ENCODE measurements at regions of chr9 and their contacts with region 1.

Region 1: GRCh38 chr9:4228606-4229005 is 71.3 kb downstream of the GLIS3 start:
- DNase-seq: peak; percentile 20
- H3K4me3 ChIP-seq: no peak overlapping the region
- H3K27ac ChIP-seq: no peak overlapping the region
- H3K4me1 ChIP-seq: peaks cover 16% of the 10 kb centered on the region
- H3K27me3 ChIP-seq: no peaks in the 10 kb centered on the region
- CTCF ChIP-seq: peak; percentile 53 to 67

Region 2: DNA sequence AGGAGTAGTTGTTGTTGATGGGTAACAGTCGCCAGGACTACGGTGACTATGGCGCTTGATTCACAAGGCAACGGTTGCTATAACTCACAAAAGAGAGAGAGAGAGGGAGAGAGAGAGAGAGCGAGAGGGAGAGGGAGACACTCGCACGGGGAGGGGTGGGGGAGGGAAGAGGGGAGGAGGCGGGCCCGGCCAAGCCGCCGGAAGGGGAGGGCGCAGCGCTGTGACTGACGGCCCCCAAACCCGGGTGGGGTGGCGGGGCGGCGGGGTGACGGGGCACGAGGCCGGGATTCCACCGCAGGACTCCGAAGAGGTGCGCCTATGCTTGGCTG is 702.8 kb before region 1 on chr9 and contains the start of gene RFX3:
- CTCF ChIA-PET with region 1: no interaction called
- dilution Hi-C with region 1: no loop called
- in situ Hi-C with region 1: no loop called
- intact Hi-C with region 1: loop called (anchors 10 kb)
- DNase-seq: peak; percentile 94
- H3K4me3 ChIP-seq: peak within 1 kb of the TSS; percentile 92 to 100 (median 98)
- H3K27ac ChIP-seq: peak within 1 kb of the TSS; percentile 99
- H3K4me1 ChIP-seq: peaks cover 8% of the 10 kb centered on the region
- H3K27me3 ChIP-seq: no peaks in the 10 kb centered on the region
- CTCF ChIP-seq: no peak
- total RNA-seq, gene RFX3: 2.3 to 7.9 TPM